ENCODE measurements at regions of chr14 and their contacts with region 1.

Region 1: GRCh38 chr14:70821584-70822529 is 12.5 kb upstream of the MAP3K9 start:
- DNase-seq: peak; percentile 87
- H3K4me3 ChIP-seq: peak overlapping the region; percentile 65 to 91
- H3K27ac ChIP-seq: peak overlapping the region in 1 of 2 experiments; percentile 29; a peak in 1 of 4 replicates
- H3K4me1 ChIP-seq: peaks cover 0 to 7% of the 10 kb centered on the region in 2 experiments; a peak in 2 of 4 replicates
- H3K27me3 ChIP-seq: no peaks in the 10 kb centered on the region
- CTCF ChIP-seq: no peak
- EP300 ChIP-seq: no peak
- RAD21 ChIP-seq: no peak

Region 2: DNA sequence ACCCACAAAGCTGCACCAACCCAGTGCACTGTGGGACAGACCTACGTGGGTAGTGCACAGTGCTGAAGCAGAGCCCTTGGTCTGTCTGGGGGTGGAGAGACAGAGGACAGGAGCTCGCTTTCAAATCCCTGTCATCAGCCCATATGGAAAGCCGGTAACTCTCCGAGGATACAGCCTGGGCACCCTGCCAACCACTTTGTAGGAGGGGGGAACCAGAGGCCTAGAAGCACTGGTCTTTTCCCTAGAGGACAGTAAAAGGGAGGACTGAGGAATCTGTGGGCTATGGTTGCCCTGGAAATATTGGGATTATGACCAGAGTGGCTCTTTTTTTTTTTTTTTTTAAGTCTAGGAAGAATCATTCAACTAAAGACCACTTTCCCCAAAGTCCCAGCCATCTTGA is 86.8 kb before region 1 on chr14:
- CTCF ChIA-PET with region 1: interaction called, 10 read pairs
- POLR2A ChIA-PET with region 1: no interaction called
- DNase-seq: peak; percentile 82
- H3K4me3 ChIP-seq: no peak overlapping the region
- H3K27ac ChIP-seq: no peak overlapping the region; a peak in 1 of 4 replicates
- H3K4me1 ChIP-seq: peaks cover 0 to 10% of the 10 kb centered on the region in 2 experiments; a peak in 2 of 4 replicates
- H3K27me3 ChIP-seq: no peaks in the 10 kb centered on the region
- CTCF ChIP-seq: no peak
- EP300 ChIP-seq: no peak
- RAD21 ChIP-seq: no peak

Region 3: DNA sequence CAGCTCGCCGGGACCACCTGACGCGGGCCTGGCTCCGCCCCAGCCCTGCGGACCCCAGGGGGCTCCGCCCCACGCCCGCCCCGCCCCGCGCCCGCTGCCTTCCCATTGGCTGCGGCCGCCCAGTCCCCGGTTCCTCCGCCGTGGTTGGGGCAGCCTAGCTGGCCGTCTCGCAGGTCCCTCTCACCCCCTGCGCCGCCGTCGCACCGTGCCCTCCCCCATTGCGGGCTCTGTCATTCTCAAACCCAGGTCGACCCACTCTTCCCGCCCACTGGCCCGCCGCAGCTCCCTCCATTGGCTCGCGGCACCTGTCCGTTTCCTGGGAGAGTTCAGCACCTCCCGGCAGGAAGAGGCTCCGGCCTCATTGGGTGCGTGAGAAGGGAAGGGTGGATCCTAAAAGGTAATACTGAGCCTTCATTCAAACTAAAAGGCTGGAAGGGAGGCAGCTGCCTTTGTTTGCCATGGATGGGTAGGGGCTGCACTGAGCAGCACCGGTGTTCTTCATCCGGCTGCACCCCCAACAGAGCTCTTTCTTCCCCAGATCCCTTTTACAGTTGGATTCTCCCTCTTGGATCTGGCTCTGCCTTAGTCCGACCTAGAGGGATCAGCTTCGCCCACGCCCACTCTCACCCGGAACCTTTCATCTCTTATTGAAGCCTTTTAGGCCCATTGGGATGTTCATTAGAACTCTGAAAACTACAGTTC is 12.2 kb before region 1 on chr14:
- CTCF ChIA-PET with region 1: interaction called, 30 read pairs
- POLR2A ChIA-PET with region 1: interaction called, 3 read pairs
- DNase-seq: peak; percentile 98
- H3K4me3 ChIP-seq: peak overlapping the region; percentile 66 to 77
- H3K27ac ChIP-seq: peak overlapping the region; percentile 13 to 67; a peak in 3 of 4 replicates
- H3K4me1 ChIP-seq: peaks cover 0 to 16% of the 10 kb centered on the region in 2 experiments; a peak in 1 of 4 replicates
- H3K27me3 ChIP-seq: no peaks in the 10 kb centered on the region
- CTCF ChIP-seq: no peak
- EP300 ChIP-seq: no peak
- RAD21 ChIP-seq: no peak

Region 4: GRCh38 chr14:70995676-70996075 is 173.8 kb after region 1 on chr14:
- CTCF ChIA-PET with region 1: no interaction called
- POLR2A ChIA-PET with region 1: no interaction called
- DNase-seq: no peak
- H3K4me3 ChIP-seq: no peak overlapping the region
- H3K27ac ChIP-seq: no peak overlapping the region
- H3K4me1 ChIP-seq: no peaks in the 10 kb centered on the region; a peak in 2 of 4 replicates
- H3K27me3 ChIP-seq: no peaks in the 10 kb centered on the region
- CTCF ChIP-seq: no peak
- EP300 ChIP-seq: no peak
- RAD21 ChIP-seq: no peak

Measured in SK-N-SH (cell line).